A673 (cell line): ENCODE measurements at regions of chr3 and their contacts with region 1.

Region 1: DNA sequence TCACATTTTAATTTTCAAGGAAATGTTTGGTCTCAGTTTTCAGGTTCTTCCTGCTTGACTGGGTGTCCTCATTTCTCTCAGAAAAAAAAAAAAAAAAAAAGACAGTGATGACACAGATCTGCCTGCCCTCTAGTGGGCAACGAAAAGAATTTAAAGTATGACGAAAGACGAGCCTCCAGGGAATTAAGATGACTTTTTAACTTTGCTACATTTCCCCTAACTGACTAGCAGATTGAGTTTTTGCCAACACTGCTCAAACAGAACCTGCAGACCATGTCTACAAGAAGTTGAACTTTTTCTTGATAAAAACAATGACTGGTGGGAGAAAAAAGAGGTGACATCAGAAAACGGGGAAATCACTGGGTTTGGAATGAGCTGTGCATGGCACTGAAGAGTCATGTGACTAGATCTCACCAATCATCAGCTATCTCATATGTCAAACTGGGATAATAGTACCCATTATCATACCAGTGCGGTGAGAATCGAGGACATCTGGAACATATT is 40.8 kb downstream of the EOMES start:
- DNase-seq: peak; percentile 79
- H3K4me3 ChIP-seq: peak overlapping the region; percentile 26
- H3K27ac ChIP-seq: peak overlapping the region; percentile 25
- H3K4me1 ChIP-seq: peaks cover 8% of the 10 kb centered on the region
- H3K27me3 ChIP-seq: no peaks in the 10 kb centered on the region
- CTCF ChIP-seq: peak; percentile 80

Region 2: GRCh38 chr3:26682406-26682805 is 998.9 kb before region 1 on chr3:
- CTCF ChIA-PET with region 1: interaction called, 18 read pairs
- POLR2A ChIA-PET with region 1: no interaction called
- intact Hi-C with region 1: no loop called
- DNase-seq: peak; percentile 75
- H3K4me3 ChIP-seq: no peak overlapping the region
- H3K27ac ChIP-seq: no peak overlapping the region
- H3K4me1 ChIP-seq: peaks cover 10% of the 10 kb centered on the region
- H3K27me3 ChIP-seq: no peaks in the 10 kb centered on the region
- CTCF ChIP-seq: no peak

Region 3: GRCh38 chr3:27134165-27134796 is 547.0 kb before region 1 on chr3:
- CTCF ChIA-PET with region 1: no interaction called
- POLR2A ChIA-PET with region 1: no interaction called
- intact Hi-C with region 1: loop called (anchors 10 kb)
- DNase-seq: peak; percentile 72
- H3K4me3 ChIP-seq: no peak overlapping the region
- H3K27ac ChIP-seq: no peak overlapping the region
- H3K4me1 ChIP-seq: no peaks in the 10 kb centered on the region
- H3K27me3 ChIP-seq: peaks cover 4% of the 10 kb centered on the region
- CTCF ChIP-seq: peak; percentile 86

Region 4: DNA sequence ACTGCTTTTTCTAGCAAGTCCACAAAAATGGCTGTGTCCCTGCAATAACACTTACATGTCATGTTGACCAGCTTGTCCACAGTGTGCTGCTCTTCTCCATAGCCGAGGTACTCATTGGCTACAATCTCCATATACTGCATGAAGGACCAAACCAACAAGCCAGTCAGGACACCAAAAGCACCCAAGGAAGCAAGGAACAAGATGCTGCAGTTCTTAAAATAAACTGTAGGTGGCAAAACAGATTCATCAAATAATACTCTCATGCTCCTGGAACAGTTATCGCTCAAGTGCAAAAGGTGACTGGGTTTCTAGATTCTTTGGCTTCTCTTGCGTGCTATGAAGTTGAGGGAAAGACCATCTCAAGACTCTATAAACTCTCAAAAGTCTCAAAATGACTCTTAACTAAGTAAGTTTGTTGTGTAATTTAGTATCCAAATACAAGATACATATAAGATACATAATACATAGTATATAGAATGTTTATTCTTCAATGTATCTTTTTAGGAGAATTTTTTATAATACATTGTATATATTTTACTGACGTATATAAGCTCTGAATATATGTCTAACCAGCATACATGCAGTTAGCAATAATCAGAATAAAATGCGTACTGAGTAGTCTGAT is 369.1 kb before region 1 on chr3:
- CTCF ChIA-PET with region 1: no interaction called
- POLR2A ChIA-PET with region 1: no interaction called
- intact Hi-C with region 1: loop called (anchors 1 kb)
- DNase-seq: peak; percentile 72
- H3K4me3 ChIP-seq: no peak overlapping the region
- H3K27ac ChIP-seq: no peak overlapping the region
- H3K4me1 ChIP-seq: no peaks in the 10 kb centered on the region
- H3K27me3 ChIP-seq: no peaks in the 10 kb centered on the region
- CTCF ChIP-seq: peak; percentile 78

Region 5: DNA sequence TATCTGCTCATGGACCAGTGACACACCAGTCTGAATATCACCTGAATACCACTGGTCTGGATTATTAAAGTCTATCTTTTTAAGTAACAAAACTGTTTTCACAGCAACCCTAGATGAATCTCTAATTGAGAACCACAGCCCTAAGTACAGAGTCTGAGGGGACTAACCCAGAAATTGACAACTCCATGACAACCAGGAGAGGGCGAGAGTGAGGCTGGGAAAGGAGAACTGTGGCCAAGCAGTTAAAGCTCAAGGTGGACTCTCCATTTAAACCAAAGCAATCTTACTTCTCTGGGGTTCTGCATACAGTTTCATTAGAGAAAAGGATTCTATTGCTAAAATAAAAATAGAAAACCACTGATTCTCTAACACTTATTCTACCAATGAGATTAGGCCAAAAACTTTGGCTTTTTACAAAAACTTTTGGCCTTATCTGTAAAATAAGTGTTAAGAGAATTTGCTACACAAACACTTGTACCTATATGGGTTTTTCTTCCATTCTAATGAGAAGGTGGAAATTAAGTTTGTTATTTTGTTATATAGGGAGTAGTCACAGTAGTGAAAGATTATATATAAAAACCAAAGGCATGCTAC is 323.5 kb before region 1 on chr3:
- CTCF ChIA-PET with region 1: interaction called, 5 read pairs
- POLR2A ChIA-PET with region 1: no interaction called
- intact Hi-C with region 1: loop called (anchors 5 kb)
- DNase-seq: peak; percentile 75
- H3K4me3 ChIP-seq: no peak overlapping the region
- H3K27ac ChIP-seq: no peak overlapping the region
- H3K4me1 ChIP-seq: peaks cover 16% of the 10 kb centered on the region
- H3K27me3 ChIP-seq: no peaks in the 10 kb centered on the region
- CTCF ChIP-seq: peak; percentile 77

Region 6: GRCh38 chr3:27484015-27484844 is 197.1 kb before region 1 on chr3 and contains the start of gene SLC4A7:
- CTCF ChIA-PET with region 1: interaction called, 8 read pairs
- POLR2A ChIA-PET with region 1: no interaction called
- intact Hi-C with region 1: loop called (anchors 5 kb)
- DNase-seq: peak; percentile 95
- H3K4me3 ChIP-seq: peak within 1 kb of the TSS; percentile 97
- H3K27ac ChIP-seq: peak within 1 kb of the TSS; percentile 94
- H3K4me1 ChIP-seq: peaks cover 14% of the 10 kb centered on the region
- H3K27me3 ChIP-seq: no peaks in the 10 kb centered on the region
- CTCF ChIP-seq: no peak
- total RNA-seq, gene SLC4A7: 22.6 and 26.2 TPM in 2 replicates